Adrenal gland (tissue), 19 donors: ENCODE measurements at regions of chr21 and their contacts with region 1.

Region 1: DNA sequence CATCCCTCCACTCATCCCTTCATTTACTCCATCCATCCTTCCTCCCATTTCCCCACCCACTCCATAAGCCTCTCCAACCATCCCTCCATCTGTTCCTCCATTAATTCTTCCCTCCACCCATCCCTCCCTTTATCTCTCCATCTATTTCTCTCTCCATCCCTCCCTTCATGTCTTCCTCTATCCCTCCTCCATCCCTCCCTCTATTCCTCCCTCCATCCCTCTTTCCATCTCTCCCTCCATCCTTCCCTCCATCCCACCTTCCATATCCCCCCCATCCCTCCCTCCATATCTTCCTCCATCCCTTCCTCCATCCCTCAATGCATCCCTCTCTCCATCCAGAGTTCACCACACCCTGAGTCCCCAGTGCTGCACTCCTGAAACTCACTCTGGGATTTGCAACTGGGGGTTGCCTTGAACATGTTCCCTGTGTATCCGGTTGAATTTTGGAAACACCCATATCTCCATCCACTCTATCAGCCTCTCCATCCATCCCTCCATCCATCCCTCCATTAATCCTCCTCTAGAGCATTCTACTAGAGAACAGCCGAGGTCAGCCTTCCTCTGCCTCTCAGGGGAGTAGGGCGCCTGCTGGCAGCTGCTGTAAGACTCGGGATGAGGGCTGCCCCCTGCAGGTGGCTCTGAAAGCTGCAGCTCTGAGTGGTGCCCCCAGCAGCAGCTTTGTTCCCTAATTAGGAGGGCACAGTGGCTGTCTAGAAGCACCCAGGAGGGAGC is 39.4 kb downstream of the ABCG1 start:
- DNase-seq: peak; percentile 57 to 86 (median 76)
- H3K4me3 ChIP-seq: no peak overlapping the region
- H3K27ac ChIP-seq: peak overlapping the region in 1 of 5 donors; percentile 48
- H3K4me1 ChIP-seq: peaks cover 21 to 48% of the 10 kb centered on the region in 2 donors
- H3K27me3 ChIP-seq: no peaks in the 10 kb centered on the region
- CTCF ChIP-seq: peak; percentile 52 to 81 (median 67)
- POLR2A ChIP-seq: no peak

Region 2: DNA sequence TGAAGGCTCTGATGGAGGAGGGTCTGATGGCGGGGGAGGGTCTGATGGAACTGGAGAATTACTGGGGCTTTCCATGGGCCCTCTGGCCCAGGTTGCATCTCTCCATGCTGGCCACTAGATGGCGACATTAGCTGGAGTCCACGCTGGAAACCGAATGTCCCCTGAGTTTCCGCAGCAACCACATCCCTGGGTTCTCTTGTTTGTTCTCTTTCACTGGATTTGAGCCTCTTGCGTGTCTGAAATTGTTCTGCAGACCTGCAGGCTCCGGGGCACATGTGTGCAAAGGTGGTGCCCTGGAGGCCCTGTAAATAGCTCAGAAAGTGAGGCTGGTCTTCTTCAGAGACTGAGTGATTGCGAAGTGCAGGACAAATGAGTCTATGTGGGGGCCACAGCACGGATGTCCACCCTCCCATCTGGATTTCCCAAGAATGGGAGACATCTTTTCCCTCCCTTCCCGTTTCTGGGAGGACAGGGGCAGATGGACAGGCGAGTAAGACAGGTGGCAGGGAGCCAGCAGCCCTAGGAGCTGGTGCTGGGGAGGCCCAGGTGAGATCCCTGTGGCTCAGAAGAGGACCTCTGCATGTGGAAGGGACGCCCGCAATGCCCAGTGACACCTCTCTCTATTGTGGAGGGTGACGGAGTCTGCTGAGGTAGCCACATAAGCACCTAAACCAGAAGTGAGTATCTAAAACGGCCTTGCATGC is 112.6 kb before region 1 on chr21:
- intact Hi-C with region 1: loop called (anchors 10 kb)
- DNase-seq: peak; percentile 56 to 79 (median 63)
- H3K4me3 ChIP-seq: no peak overlapping the region
- H3K27ac ChIP-seq: no peak overlapping the region
- H3K4me1 ChIP-seq: no peaks in the 10 kb centered on the region
- H3K27me3 ChIP-seq: no peaks in the 10 kb centered on the region
- CTCF ChIP-seq: peak; percentile 88 to 97 (median 92)
- POLR2A ChIP-seq: no peak

Region 3: GRCh38 chr21:42171091-42172053 is 86.9 kb before region 1 on chr21:
- intact Hi-C with region 1: loop called in 1 of 2 experiments (anchors 10 kb)
- DNase-seq: peak in 6 of 7 donors; percentile 35 to 74 (median 46)
- H3K4me3 ChIP-seq: no peak overlapping the region
- H3K27ac ChIP-seq: peak overlapping the region in 1 of 5 donors; percentile 31
- H3K4me1 ChIP-seq: no peaks in the 10 kb centered on the region
- H3K27me3 ChIP-seq: no peaks in the 10 kb centered on the region
- CTCF ChIP-seq: no peak
- POLR2A ChIP-seq: no peak

Region 4: DNA sequence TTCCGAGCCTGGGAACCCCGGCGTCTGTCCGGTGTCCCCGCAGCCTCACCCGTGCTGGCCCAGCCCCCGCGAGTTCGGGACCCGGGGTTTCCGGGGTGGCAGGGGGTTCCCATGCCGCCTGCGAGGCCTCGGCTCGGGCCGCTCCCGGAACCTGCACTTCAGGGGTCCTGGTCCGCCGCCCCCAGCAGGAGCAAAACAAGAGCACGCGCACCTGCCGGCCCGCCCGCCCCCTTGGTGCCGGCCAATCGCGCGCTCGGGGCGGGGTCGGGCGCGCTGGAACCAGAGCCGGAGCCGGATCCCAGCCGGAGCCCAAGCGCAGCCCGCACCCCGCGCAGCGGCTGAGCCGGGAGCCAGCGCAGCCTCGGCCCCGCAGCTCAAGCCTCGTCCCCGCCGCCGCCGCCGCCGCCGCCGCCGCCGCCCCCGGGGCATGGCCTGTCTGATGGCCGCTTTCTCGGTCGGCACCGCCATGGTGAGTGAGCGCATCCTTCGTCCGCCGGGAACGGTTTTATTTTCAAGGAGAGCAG is 39.4 kb before region 1 on chr21 and contains the start of gene ABCG1:
- intact Hi-C with region 1: loop called in 1 of 2 experiments (anchors 5 kb)
- DNase-seq: peak in 6 of 7 donors; percentile 51 to 80 (median 67)
- H3K4me3 ChIP-seq: peak within 1 kb of the TSS; percentile 56 to 89 (median 84)
- H3K27ac ChIP-seq: peak within 1 kb of the TSS; percentile 39 to 94 (median 88)
- H3K4me1 ChIP-seq: peaks cover 17 to 28% of the 10 kb centered on the region in 2 donors
- H3K27me3 ChIP-seq: no peaks in the 10 kb centered on the region
- CTCF ChIP-seq: peak in 1 of 6 experiments; percentile 2
- POLR2A ChIP-seq: peak; percentile 86 to 92
- total RNA-seq, gene ABCG1: 23.2 to 136 (median 88.2) TPM

Region 5: DNA sequence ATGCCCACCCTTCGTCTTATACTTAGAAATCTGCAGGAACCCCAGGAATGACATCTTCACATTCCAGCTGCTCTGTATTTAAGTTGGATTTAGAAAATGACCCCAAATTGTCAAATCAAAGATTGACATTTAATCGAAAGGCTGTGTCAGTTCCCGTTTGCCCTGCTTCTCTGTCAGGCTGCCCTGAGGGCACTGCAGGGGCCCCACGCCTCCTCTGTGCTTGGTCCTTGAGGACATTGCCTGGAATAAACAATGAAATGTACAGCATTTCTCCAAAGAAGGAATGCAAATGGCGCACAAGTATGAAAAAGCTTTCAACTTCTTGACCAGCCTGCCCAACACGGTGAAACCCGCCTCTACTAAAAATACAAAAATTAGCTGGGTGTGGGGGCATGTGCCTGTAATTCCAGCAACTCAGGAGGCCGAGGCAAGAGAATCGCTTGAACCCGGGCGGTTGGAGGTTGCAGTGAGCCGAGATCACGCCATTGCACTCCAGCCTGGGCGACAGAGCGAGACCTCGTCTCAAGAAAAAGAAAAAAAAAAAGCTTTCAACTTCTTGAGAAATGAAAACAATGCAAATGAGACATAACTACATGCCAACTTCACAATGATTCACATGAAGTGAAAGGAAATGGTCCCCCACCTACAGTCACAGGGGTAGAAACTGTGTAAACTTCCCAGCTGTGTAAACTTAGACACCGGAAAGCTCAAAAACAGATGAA is 134.6 kb after region 1 on chr21:
- intact Hi-C with region 1: no loop called
- DNase-seq: no peak
- H3K4me3 ChIP-seq: no peak overlapping the region
- H3K27ac ChIP-seq: no peak overlapping the region
- H3K4me1 ChIP-seq: no peaks in the 10 kb centered on the region
- H3K27me3 ChIP-seq: no peaks in the 10 kb centered on the region
- CTCF ChIP-seq: no peak
- POLR2A ChIP-seq: no peak